ENCODE measurements at regions of chr2 and their contacts with region 1.

Region 1: GRCh38 chr2:68487773-68488355 is 20.5 kb downstream of the APLF start:
- DNase-seq: no peak
- H3K4me3 ChIP-seq: no peak overlapping the region
- H3K27me3 ChIP-seq: no peaks in the 10 kb centered on the region
- CTCF ChIP-seq: peak; percentile 45

Region 2: DNA sequence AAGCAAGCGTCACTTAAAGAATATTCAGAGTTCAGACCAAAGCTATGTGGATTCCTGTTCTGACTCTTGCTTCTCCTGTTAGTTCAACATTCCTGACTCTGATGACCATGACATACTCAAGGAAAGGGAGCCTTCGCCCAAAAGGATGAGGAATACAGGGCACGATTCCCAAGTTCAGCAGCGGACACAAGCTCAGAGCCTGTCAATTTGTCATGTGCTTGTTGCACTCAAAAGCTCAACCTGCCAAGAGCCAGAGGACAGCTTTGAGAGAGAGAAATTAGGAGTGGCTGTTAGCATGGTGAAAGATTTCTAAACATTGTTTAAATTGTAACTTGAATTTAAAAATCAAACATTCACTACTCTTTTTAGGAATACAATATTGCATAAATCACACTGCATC is 12.8 kb after region 1 on chr2:
- CTCF ChIA-PET with region 1: interaction called, 11 read pairs
- POLR2A ChIA-PET with region 1: no interaction called
- DNase-seq: no peak
- H3K4me3 ChIP-seq: no peak overlapping the region
- H3K27me3 ChIP-seq: no peaks in the 10 kb centered on the region
- CTCF ChIP-seq: no peak

Region 3: GRCh38 chr2:68726608-68727367 is 238.9 kb after region 1 on chr2:
- CTCF ChIA-PET with region 1: no interaction called
- POLR2A ChIA-PET with region 1: no interaction called
- DNase-seq: no peak
- H3K4me3 ChIP-seq: no peak overlapping the region
- H3K27me3 ChIP-seq: no peaks in the 10 kb centered on the region
- CTCF ChIP-seq: no peak

Measured in BJ (cell line).